Head of caudate nucleus (tissue), 42 donors: ENCODE measurements at regions of chr4 and their contacts with region 1.

Region 1: GRCh38 chr4:40924096-40924792 is 174.5 kb downstream of the NSUN7 start:
- DNase-seq: peak; percentile 38 to 89 (median 70)

Region 2: DNA sequence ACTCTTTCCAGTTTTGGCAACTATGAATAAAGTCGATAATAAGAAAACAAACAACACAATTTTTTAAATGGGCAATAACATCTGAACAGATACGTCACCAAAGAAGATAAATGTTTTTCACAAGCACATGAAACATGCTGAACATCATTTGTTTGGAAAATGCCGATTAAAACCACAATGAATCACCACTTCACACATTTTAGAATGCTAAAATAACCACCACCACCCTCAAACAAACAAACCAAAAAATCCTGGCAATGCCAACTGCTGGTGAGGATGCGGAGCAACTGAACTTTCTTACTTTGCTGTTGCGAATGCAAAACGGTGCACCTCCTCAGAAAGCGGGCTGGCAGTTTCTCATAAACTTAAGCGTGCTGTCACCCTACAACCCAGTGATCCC is 58.5 kb before region 1 on chr4:
- intact Hi-C with region 1: no loop called
- DNase-seq: no peak

Region 3: DNA sequence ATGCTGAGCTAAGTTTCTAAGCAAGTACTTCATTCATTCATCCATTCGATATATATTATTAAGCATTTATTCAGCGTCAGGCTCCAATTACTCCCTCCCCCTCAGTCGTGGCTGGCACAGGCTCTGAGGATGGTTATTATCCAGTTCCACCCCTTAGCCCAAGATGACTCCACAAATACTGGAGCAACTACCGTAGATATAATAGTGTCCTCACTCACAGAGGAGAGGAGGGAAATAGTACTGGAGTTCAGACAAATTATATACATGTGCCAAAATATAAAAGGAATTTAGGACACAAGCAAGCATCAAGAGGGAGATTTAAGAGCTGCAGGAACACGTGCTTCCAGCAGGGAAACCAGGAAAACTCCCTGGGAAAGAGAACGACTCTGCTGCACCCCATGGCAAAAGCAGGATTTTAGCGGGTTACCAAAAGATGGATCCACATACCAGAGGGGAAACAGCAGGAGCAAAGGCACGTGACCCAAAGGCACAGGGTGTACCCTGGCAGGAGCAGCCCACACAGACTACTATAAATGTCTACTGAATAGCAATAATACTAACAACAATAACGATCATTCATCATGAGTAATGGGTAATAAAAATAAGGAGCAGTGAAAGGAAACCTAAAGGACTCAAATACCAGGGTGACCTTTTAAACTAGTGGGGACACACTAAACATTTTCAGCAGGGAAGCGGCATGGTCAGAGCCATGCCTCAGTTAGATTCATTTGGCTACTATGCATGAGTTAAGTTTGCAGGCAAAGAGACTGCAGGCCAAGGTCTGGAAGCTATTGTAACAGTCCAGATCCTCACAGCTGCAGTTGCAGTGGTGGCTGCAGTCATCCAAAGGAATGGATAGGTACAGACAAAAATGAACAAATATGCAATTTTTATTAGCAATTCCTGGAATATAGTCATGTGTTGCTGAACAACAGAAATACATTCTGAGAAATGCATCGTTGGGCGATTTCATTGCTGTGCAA is 136.4 kb after region 1 on chr4:
- intact Hi-C with region 1: loop called (anchors 10 kb)
- DNase-seq: peak in 39 of 42 donors; percentile 22 to 85 (median 51)